K562 (cell line): ENCODE measurements at regions of chrX and their contacts with region 1.

Region 1: DNA sequence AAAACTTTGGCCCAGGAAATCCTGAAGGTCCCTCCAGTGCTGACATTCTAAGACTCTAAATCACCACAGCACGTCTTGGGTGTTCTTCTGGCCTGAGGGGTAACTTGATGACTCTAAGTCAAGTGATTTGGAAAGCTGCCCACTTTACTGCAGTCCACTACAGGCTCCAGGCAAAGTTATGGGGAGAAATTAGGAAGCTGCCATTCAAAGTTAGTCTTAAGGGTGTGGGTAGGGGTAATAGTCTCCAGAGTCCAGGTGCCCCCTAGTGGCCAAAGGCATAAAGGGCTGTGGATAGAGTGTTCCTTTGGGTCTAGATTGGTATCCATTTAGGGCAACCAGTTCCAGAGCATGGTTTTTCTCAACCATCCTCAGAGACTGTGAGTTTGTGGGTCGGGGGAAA is 38.7 kb upstream of the SLC16A2 start:
- DNase-seq: peak; percentile 58 to 64 (median 61)
- ATAC-seq: peak; percentile 97
- H3K4me3 ChIP-seq: no peak overlapping the region
- H3K27ac ChIP-seq: no peak overlapping the region
- H3K4me1 ChIP-seq: no peaks in the 10 kb centered on the region
- H3K27me3 ChIP-seq: no peaks in the 10 kb centered on the region
- CTCF ChIP-seq: peak; percentile 66 to 71 (median 71)
- EP300 ChIP-seq: no peak
- POLR2A ChIP-seq: no peak
- RAD21 ChIP-seq: peak; percentile 57 to 58

Region 2: DNA sequence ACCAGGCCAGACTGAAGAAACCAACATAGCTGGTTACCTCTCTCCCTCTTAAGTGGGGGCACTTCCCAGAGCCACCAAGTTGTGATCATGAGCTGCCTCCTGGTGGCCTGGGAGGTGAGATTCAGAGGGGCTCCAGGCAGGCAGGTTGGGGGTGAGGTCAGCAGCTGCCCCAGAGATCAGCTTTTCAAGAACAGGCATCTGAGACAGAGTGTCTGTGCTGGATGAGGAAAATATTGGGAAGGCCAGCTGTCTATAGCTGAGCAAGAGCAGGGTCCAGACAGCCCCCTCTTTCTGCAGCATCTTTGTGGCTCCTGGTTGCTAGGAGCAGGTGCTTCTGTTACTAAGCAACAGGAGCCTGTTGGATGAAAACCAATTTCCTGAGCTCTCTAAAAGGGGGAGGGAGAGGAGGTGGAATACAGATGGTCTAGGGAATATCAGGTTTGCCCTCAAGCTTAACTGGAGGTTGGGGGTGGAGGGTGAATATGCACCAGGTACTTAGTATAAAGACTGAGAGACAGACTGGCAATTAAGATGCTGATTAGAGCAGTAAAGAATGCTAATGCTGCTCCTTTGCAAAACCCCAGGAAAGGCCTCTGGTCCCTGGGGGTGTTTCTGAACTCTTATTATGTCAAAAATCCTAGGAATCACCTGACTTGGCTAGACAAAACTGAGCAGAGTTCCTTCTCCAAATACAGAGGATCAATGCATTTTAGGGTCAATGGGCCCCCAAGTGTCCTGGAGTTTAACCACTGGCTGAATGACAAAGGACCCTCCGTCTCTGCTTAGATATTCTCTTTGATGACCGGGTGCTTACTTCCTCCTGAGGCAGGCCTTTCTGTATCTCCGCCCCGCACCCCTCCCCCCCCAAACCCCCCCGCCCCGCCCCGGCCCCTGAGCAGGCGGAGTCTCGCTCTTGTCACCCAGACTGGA is 57.2 kb before region 1 on chrX:
- CTCF ChIA-PET with region 1: no interaction called
- POLR2A ChIA-PET with region 1: no interaction called
- in situ Hi-C with region 1: no loop called
- intact Hi-C with region 1: loop called (anchors 10 kb)
- DNase-seq: peak; percentile 18 to 54 (median 42)
- ATAC-seq: peak; percentile 79
- H3K4me3 ChIP-seq: no peak overlapping the region
- H3K27ac ChIP-seq: no peak overlapping the region
- H3K4me1 ChIP-seq: no peaks in the 10 kb centered on the region; a peak in 1 of 5 replicates
- H3K27me3 ChIP-seq: no peaks in the 10 kb centered on the region
- CTCF ChIP-seq: peak; percentile 18 to 29 (median 23); a peak in 2 of 6 replicates
- EP300 ChIP-seq: no peak
- POLR2A ChIP-seq: no peak
- RAD21 ChIP-seq: no peak

Region 3: GRCh38 chrX:74550295-74550802 is 167.7 kb after region 1 on chrX:
- CTCF ChIA-PET with region 1: interaction called, 12 read pairs
- POLR2A ChIA-PET with region 1: no interaction called
- in situ Hi-C with region 1: no loop called
- intact Hi-C with region 1: loop called (anchors 1 kb)
- DNase-seq: peak; percentile 55 to 79 (median 66)
- ATAC-seq: peak; percentile 96
- H3K4me3 ChIP-seq: no peak overlapping the region
- H3K27ac ChIP-seq: no peak overlapping the region
- H3K4me1 ChIP-seq: no peaks in the 10 kb centered on the region
- H3K27me3 ChIP-seq: no peaks in the 10 kb centered on the region
- CTCF ChIP-seq: peak; percentile 95 to 99 (median 99)
- EP300 ChIP-seq: no peak
- POLR2A ChIP-seq: no peak
- RAD21 ChIP-seq: peak; percentile 67 to 83

Region 4: DNA sequence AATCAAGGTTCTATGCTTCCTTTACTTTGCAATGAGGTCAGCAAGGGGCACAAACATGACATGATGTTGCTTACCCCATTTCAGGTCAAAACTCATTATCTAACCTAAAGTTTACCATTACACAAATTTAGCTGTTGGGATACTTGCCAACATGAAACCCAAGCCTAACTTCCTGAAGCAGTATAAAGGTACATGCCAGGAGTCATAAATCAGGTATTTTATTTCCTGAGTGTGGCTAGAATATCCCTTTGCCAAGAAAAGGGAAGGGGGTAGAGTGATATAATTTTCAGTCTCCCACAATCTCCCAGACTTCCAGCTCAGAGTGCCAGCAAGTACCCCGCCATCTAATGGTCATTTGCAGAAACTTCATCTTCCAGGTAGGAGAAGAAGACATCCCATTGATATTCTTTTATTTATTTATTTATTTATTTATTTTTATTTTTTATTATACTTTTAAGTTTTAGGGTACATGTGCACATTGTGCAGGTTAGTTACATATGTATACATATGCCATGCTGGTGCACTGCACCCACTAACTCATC is 406.0 kb after region 1 on chrX:
- CTCF ChIA-PET with region 1: no interaction called
- POLR2A ChIA-PET with region 1: no interaction called
- in situ Hi-C with region 1: no loop called
- intact Hi-C with region 1: no loop called
- DNase-seq: peak in 2 of 4 experiments; percentile 0 to 2
- ATAC-seq: no peak
- H3K4me3 ChIP-seq: no peak overlapping the region
- H3K27ac ChIP-seq: no peak overlapping the region
- H3K4me1 ChIP-seq: no peaks in the 10 kb centered on the region
- H3K27me3 ChIP-seq: no peaks in the 10 kb centered on the region
- CTCF ChIP-seq: no peak
- EP300 ChIP-seq: no peak
- POLR2A ChIP-seq: no peak
- RAD21 ChIP-seq: no peak